ENCODE measurements at regions of chr9 and their contacts with region 1.

Region 1: GRCh38 chr9:135085830-135086546 is 1.5 kb upstream of the OLFM1 start:
- DNase-seq: peak; percentile 76
- H3K4me3 ChIP-seq: peak overlapping the region in 2 of 4 donors; percentile 19 to 47
- H3K27ac ChIP-seq: no peak overlapping the region
- H3K4me1 ChIP-seq: peaks cover 10 to 33% (median 16%) of the 10 kb centered on the region in 4 donors
- H3K27me3 ChIP-seq: peaks cover 34% of the 10 kb centered on the region
- CTCF ChIP-seq: peak; percentile 90 to 94 (median 91)
- EP300 ChIP-seq: no peak
- POLR2A ChIP-seq: no peak

Region 2: DNA sequence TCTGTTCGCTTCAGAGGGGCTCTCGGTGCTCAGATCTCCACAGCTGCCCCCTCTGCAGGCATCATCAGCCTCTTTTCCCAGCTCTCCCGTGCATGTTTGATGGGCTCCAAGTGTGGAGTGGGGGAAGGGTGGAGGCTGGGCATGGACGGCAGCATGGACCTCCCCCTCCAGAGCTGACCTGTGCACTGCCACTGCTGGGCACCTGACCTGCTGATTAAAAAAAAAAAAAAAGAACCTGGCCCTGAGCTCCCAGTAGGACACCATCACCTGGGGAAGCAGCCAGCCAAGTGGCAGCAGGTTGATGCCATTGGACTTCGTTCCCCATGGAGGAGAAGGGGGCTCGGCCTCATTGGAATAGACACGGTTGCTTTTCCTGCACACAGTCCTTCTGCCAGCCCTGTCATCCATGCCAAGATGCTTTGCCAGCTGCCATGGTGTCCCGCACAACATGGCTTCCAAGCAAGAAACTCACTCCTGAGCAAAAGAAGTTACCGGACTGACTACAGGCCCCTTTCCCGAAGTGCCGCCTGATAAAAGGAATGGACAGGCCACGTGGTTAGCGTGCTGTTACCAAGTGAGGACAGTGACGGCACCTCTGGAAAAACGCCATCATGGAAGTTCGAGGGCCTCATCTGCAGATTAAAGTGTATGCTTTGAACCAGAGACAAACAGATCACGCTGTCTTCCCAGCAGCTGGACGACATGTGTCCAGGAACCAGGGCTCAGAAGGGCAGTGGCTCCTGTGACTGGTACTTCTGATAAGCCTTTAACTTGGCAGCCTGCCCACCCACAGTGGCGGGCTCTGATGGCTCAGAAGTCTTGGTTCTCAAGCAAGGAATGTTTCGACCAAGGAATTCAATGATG is 1075.4 kb before region 1 on chr9:
- in situ Hi-C with region 1: no loop called
- intact Hi-C with region 1: no loop called
- DNase-seq: no peak
- H3K4me3 ChIP-seq: no peak overlapping the region
- H3K27ac ChIP-seq: no peak overlapping the region
- H3K4me1 ChIP-seq: no peaks in the 10 kb centered on the region
- H3K27me3 ChIP-seq: no peaks in the 10 kb centered on the region
- CTCF ChIP-seq: no peak
- EP300 ChIP-seq: no peak
- POLR2A ChIP-seq: no peak

Region 3: DNA sequence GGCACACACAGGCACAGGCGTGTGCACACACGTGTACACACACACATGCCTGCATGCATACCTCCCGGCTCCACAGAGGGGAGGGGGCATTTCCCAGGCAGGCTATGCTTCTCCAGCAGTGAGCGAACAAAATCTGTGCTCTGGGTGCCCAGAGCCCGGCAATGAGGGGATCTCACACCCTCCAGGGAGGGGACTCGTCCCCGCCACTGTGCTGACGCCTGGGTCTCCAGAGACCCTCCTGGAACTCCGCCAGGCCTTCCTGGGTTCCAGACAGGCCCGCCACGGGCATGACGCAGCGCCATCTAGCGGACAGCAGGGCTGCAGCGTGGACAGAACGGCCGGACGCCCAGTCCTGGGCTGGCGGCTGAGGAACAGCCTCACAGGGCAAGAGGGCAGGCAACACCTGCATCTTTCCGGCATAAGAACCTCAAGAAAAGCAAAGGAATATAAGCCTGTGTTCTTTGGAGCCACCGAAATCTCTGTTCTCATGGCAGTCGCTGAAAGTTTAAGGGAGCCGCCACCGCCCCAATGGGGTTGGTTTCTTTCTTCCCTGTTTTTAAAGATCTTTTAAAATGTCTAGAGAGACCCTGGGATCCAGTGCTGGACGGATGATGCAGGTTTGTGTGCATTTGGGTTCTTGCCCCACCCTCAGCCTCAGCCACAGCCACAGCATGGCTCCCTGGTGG is 258.0 kb after region 1 on chr9:
- in situ Hi-C with region 1: loop called in 3 of 4 experiments (anchors 10 to 25 kb)
- intact Hi-C with region 1: loop called (anchors 5 kb)
- DNase-seq: peak; percentile 52
- H3K4me3 ChIP-seq: no peak overlapping the region
- H3K27ac ChIP-seq: no peak overlapping the region
- H3K4me1 ChIP-seq: no peaks in the 10 kb centered on the region
- H3K27me3 ChIP-seq: peaks cover 28% of the 10 kb centered on the region
- CTCF ChIP-seq: peak; percentile 69 to 90 (median 81)
- EP300 ChIP-seq: no peak
- POLR2A ChIP-seq: no peak

Region 4: DNA sequence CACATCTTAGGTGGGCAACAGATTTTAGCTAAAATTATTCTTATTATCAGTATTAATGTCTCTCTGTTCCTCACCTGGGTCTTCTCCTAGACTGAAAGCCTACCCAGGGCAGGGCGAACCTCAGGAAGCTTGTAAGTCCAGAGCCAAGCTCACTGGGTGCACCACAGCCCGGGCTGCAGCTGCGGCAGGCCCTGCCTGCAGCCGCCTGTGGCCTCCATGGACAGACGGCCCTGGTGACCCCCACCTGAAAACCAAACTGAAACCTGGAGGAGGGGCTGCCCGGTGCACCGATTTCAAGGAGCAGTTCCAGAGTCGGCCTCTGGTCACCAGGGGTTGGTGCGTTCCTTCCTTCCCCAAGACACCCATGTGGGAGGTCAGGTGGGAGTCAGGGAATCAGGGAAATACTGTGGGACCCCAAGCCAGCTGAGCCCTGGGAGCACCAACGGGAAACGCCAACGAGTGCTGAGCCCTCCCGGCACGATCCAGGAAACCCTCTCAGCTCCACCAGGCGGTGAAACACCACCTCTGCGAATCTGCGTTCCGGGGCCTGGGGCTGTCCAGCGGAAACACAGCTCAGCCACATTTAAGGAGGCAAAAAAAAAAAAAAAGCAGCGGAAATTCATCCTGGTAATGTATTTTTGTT is 325.0 kb after region 1 on chr9:
- in situ Hi-C with region 1: loop called (anchors 25 kb)
- intact Hi-C with region 1: loop called (anchors 2 kb)
- DNase-seq: no peak
- H3K4me3 ChIP-seq: no peak overlapping the region
- H3K27ac ChIP-seq: no peak overlapping the region
- H3K4me1 ChIP-seq: no peaks in the 10 kb centered on the region
- H3K27me3 ChIP-seq: peaks cover 23% of the 10 kb centered on the region
- CTCF ChIP-seq: no peak
- EP300 ChIP-seq: no peak
- POLR2A ChIP-seq: no peak

Measured in transverse colon (tissue), 4 donors.